PC-9 (cell line): ENCODE measurements at regions of chr12 and their contacts with region 1.

Region 1: DNA sequence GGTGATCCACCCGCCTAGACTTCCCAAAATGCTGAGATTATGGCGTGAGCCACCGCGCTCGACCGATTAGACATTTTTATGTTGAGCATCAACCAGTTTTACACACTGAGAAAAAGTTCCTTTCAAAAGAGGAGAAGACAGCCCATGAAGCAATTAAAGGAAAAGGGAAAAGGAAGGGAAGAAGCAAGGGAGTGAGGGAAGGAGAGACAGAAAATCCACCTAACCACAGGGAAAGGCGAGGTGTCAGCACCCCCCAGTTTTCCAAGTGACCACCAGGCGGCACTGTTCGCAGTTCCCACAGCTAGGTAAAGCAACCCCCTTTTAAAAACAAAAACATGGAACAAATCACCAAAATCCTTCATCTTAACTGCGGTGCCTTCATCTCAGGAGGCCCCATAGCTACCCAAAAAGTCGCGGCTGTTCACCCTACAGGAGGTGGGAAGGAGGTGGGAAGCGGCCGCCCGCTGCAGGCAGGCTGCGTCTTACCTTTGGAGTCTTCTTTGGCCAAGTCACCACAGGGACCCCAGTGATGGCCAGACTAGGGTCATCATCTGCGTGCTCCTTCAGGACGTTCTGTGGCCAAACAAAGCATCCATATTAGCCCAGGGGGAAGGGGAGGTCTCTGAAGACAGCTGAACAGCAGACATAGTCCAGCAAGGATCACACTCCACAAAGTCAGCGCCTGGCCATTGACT is 86.6 kb downstream of the KDM2B start:
- DNase-seq: peak in 1 of 2 experiments; percentile 39
- H3K4me3 ChIP-seq: no peak overlapping the region
- H3K27ac ChIP-seq: no peak overlapping the region
- H3K4me1 ChIP-seq: no peaks in the 10 kb centered on the region
- H3K27me3 ChIP-seq: no peaks in the 10 kb centered on the region
- CTCF ChIP-seq: peak; percentile 90

Region 2: GRCh38 chr12:121050725-121051124 is 443.5 kb before region 1 on chr12:
- CTCF ChIA-PET with region 1: interaction called, 13 read pairs
- POLR2A ChIA-PET with region 1: no interaction called
- intact Hi-C with region 1: no loop called
- DNase-seq: peak in 1 of 2 experiments; percentile 35
- H3K4me3 ChIP-seq: no peak overlapping the region
- H3K27ac ChIP-seq: no peak overlapping the region
- H3K4me1 ChIP-seq: no peaks in the 10 kb centered on the region
- H3K27me3 ChIP-seq: no peaks in the 10 kb centered on the region
- CTCF ChIP-seq: no peak

Region 3: GRCh38 chr12:121513464-121514183 is 19.4 kb after region 1 on chr12:
- CTCF ChIA-PET with region 1: interaction called, 10 read pairs
- POLR2A ChIA-PET with region 1: no interaction called
- intact Hi-C with region 1: no loop called
- DNase-seq: peak; percentile 57 to 75
- H3K4me3 ChIP-seq: no peak overlapping the region
- H3K27ac ChIP-seq: no peak overlapping the region
- H3K4me1 ChIP-seq: no peaks in the 10 kb centered on the region
- H3K27me3 ChIP-seq: no peaks in the 10 kb centered on the region
- CTCF ChIP-seq: no peak; the same call in 1 of the 2 replicates

Region 4: DNA sequence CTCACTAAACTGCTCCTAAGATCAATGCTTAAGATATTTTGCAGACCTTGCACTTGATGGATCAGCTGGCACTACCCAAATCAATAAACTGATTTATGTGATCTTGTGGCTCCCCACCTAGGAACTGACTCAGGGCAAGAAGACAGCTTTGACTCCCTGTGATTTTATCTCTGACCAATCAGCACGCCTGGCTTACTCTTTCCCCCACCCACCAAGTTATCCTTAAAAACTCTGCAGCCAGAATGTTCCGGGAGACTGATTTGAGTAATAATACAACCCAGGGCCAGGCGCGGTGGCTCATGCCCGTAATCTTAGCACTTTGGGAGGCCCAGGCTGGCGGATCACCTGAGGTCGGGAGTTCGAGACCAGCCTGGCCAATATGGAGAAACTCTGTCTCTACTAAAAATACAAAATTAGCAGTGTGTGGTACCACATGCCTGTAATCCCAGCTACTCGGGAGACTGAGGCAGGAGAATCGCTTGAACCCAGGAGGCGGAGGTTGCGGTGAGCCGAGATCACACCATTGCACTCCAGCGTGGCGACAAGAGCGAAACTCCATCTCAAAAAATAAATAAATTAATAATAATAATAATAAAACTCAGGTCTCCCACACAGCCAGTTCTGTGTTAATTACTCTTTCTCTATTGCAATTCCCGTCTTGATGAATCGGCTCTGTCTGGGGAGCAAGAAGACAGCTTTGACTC is 163.2 kb after region 1 on chr12:
- CTCF ChIA-PET with region 1: interaction called, 10 read pairs
- POLR2A ChIA-PET with region 1: no interaction called
- intact Hi-C with region 1: no loop called
- DNase-seq: no peak
- H3K4me3 ChIP-seq: no peak overlapping the region
- H3K27ac ChIP-seq: no peak overlapping the region
- H3K4me1 ChIP-seq: no peaks in the 10 kb centered on the region
- H3K27me3 ChIP-seq: no peaks in the 10 kb centered on the region
- CTCF ChIP-seq: no peak